HepG2 (cell line): ENCODE measurements at regions of chr2 and their contacts with region 1.

Region 1: GRCh38 chr2:191811807-191812602 is 34.9 kb downstream of the CAVIN2 start:
- DNase-seq: peak; percentile 68
- ATAC-seq: peak; percentile 94
- H3K4me3 ChIP-seq: no peak overlapping the region
- H3K27ac ChIP-seq: no peak overlapping the region
- H3K4me1 ChIP-seq: 0 out of 2 replicates have a peak, but pooled peaks cover 11% of the 10 kb centered on the region
- H3K27me3 ChIP-seq: no peaks in the 10 kb centered on the region
- CTCF ChIP-seq: peak; percentile 91
- EP300 ChIP-seq: no peak
- POLR2A ChIP-seq: no peak
- RAD21 ChIP-seq: peak; percentile 95

Region 2: DNA sequence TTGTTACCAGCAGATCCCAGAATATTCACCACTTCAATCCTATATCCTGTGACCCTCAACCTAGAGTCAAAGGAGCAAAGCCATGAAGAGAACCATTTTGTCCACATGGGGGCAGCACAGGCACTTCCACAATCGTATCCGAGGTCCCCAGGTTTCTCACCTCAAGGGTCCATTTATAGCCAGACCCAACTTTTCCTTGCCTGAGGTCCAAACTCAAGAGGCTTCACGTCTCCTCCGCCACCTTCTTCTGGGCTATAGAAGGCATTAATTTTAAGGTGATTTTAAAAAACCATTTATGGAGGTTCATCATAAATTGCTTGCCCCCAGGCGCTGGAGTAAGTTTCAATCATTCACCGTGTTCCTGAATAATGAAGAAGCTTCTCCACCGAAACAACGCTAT is 245.7 kb before region 1 on chr2:
- CTCF ChIA-PET with region 1: no interaction called
- POLR2A ChIA-PET with region 1: no interaction called
- in situ Hi-C with region 1: no loop called
- intact Hi-C with region 1: no loop called
- DNase-seq: peak; percentile 71
- ATAC-seq: peak; percentile 96
- H3K4me3 ChIP-seq: no peak overlapping the region
- H3K27ac ChIP-seq: no peak overlapping the region
- H3K4me1 ChIP-seq: peaks cover 11% of the 10 kb centered on the region
- H3K27me3 ChIP-seq: no peaks in the 10 kb centered on the region
- CTCF ChIP-seq: peak; percentile 88
- EP300 ChIP-seq: no peak
- POLR2A ChIP-seq: no peak
- RAD21 ChIP-seq: peak; percentile 75

Region 3: GRCh38 chr2:191869178-191869577 is 57.2 kb after region 1 on chr2:
- CTCF ChIA-PET with region 1: interaction called, 3 read pairs
- POLR2A ChIA-PET with region 1: no interaction called
- in situ Hi-C with region 1: no loop called
- intact Hi-C with region 1: loop called (anchors 2 kb)
- DNase-seq: peak; percentile 67
- ATAC-seq: peak; percentile 8; the same call in 1 of the 3 replicates
- H3K4me3 ChIP-seq: no peak overlapping the region
- H3K27ac ChIP-seq: peak overlapping the region; percentile 1
- H3K4me1 ChIP-seq: peaks cover 69% of the 10 kb centered on the region
- H3K27me3 ChIP-seq: no peaks in the 10 kb centered on the region
- CTCF ChIP-seq: peak; percentile 74
- EP300 ChIP-seq: peak in 1 of 2 experiments; percentile 64; a peak in 1 of 4 replicates
- POLR2A ChIP-seq: no peak
- RAD21 ChIP-seq: peak; percentile 38; the same call in 1 of the 2 replicates

Region 4: GRCh38 chr2:192029089-192029488 is 217.1 kb after region 1 on chr2:
- CTCF ChIA-PET with region 1: no interaction called
- POLR2A ChIA-PET with region 1: no interaction called
- in situ Hi-C with region 1: no loop called
- intact Hi-C with region 1: loop called (anchors 1 kb)
- DNase-seq: no peak
- ATAC-seq: peak; percentile 76
- H3K4me3 ChIP-seq: no peak overlapping the region
- H3K27ac ChIP-seq: no peak overlapping the region
- H3K4me1 ChIP-seq: no peaks in the 10 kb centered on the region
- H3K27me3 ChIP-seq: no peaks in the 10 kb centered on the region
- CTCF ChIP-seq: peak; percentile 31; the same call in 1 of the 2 replicates
- EP300 ChIP-seq: no peak
- POLR2A ChIP-seq: no peak
- RAD21 ChIP-seq: no peak

Region 5: GRCh38 chr2:192286093-192286701 is 474.2 kb after region 1 on chr2:
- CTCF ChIA-PET with region 1: interaction called, 10 read pairs
- POLR2A ChIA-PET with region 1: no interaction called
- in situ Hi-C with region 1: no loop called
- intact Hi-C with region 1: loop called (anchors 1 kb)
- DNase-seq: peak; percentile 35
- ATAC-seq: peak; percentile 83
- H3K4me3 ChIP-seq: no peak overlapping the region
- H3K27ac ChIP-seq: no peak overlapping the region
- H3K4me1 ChIP-seq: no peaks in the 10 kb centered on the region
- H3K27me3 ChIP-seq: no peaks in the 10 kb centered on the region
- CTCF ChIP-seq: peak; percentile 49
- EP300 ChIP-seq: no peak
- POLR2A ChIP-seq: no peak
- RAD21 ChIP-seq: no peak